ENCODE measurements at regions of chr1 and their contacts with region 1.

Region 1: GRCh38 chr1:59926381-59927123 is at the start of gene CYP2J2:
- DNase-seq: peak; percentile 47 to 65
- H3K4me3 ChIP-seq: peak within 1 kb of the TSS; percentile 69
- H3K27ac ChIP-seq: no peak within 1 kb of the TSS
- H3K4me1 ChIP-seq: peaks cover 13% of the 10 kb centered on the region; the same call in 1 of the 2 replicates
- H3K27me3 ChIP-seq: no peaks in the 10 kb centered on the region
- CTCF ChIP-seq: no peak
- total RNA-seq, gene CYP2J2: 1.6 and 2.1 TPM in 2 replicates

Region 2: DNA sequence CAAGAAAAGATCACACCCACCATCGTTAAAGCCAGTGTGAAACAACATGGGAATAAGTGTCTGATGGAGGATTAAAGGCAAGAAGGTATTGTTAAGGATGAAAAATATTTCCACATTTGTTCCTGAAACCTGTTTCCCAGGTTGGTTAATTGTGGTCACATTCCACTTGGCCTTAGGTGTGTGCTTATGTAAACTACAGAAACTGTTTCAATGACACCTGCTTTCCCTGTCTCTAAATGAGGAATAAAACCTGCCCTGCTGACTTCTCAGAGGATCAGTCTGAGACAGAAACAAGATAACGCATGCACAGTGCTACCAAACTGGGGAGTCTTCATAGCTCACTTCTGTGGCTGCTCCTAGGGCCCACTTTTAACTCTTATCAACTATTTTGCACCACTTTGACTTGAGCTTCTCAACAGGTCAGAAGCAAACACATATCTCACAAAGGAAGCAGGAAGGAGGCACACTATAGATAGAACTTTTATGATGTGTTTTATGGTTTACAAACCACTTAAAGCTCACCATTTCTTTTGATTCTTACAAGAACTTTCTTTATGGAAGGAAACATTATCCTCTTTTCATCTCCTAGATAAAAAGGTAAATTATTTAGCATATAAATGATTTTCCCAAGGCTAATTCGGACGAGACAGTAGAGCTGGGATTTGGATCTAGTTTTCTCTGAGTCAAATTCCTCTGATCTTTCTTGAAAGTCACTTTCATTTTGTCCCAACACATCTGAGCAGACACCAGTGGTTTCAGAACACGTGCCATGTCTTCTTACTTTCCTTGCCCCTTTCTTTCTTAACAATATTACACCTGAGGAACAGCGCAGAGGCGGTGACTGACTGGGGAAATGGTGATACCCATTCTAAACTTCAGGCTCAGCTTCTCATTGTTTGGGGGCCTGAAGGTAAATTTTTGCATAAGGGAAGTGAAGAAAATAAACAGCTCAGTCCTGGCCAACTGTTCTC is 33.4 kb before region 1 on chr1:
- CTCF ChIA-PET with region 1: no interaction called
- POLR2A ChIA-PET with region 1: no interaction called
- intact Hi-C with region 1: loop called (anchors 1 kb)
- DNase-seq: peak; percentile 50 to 95
- H3K4me3 ChIP-seq: peak overlapping the region; percentile 7; the same call in 1 of the 2 replicates
- H3K27ac ChIP-seq: peak overlapping the region; percentile 88
- H3K4me1 ChIP-seq: peaks cover 34% of the 10 kb centered on the region
- H3K27me3 ChIP-seq: no peaks in the 10 kb centered on the region
- CTCF ChIP-seq: no peak

Region 3: DNA sequence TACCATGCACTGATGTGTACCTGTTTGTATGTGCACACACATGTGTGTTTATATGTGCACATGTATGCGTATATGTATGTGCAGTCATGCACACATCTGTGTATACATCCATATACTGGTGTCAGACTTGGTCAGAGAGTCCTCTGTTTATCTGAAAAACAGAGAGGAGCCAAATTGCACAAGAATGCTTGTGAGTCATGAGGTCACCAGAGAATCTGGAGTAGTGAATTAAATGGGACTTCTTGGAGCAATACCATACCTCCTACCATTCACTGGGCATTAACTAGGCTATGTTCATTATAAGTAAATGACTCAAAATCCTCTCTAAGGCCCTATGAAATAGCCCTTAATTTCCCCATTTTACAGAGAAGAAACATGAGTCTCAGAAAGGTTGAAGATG is 419.1 kb after region 1 on chr1:
- CTCF ChIA-PET with region 1: no interaction called
- POLR2A ChIA-PET with region 1: no interaction called
- intact Hi-C with region 1: no loop called
- DNase-seq: no peak
- H3K4me3 ChIP-seq: no peak overlapping the region
- H3K27ac ChIP-seq: no peak overlapping the region
- H3K4me1 ChIP-seq: no peaks in the 10 kb centered on the region
- H3K27me3 ChIP-seq: no peaks in the 10 kb centered on the region
- CTCF ChIP-seq: no peak

Measured in PC-9 (cell line).